ENCODE measurements at regions of chr5 and their contacts with region 1.

Region 1: DNA sequence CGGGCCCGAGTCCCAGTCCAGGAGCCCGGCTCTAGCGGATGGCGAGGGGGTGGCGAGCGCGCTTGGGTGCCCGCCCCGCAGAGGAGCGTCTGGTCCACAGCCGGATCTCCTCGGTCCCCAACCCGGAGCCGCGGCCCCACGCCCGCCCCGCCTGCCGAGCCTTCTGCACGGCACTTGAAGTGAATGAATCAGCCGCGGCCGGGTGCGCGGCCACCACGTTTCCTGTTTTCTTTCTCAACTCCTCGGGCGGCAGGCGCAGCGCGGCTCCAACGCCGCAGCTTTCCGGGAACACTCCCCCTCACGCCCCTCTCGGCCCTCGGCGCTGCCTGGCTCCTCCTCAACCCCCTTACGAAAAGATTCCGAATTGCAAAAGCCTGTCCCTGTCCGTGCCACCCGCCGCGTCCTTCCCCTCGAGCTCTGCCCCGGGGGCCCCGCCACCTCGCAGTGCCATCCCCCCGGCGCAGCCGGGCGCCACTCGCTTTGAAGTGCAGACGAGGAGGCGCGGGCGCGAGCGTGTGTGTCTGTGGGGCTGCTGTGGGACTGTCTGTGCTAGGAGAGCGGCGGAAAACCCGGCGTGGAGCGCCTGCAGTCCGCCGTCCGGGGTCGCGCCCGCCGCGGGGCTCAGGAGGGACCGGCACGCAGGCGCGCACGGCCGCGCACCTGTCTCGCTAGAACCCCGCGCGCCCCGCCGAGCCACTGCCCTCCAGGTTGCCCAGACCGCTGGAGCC is 456.6 kb downstream of the RAB3C start:
- DNase-seq: peak; percentile 92
- H3K4me3 Mint-ChIP-seq: peak overlapping the region; percentile 84
- H3K27ac Mint-ChIP-seq: peak overlapping the region; percentile 99
- H3K4me1 Mint-ChIP-seq: peaks cover 43% of the 10 kb centered on the region
- H3K27me3 Mint-ChIP-seq: no peaks in the 10 kb centered on the region

Region 2: GRCh38 chr5:59007460-59008063 is 31.9 kb before region 1 on chr5:
- CTCF ChIA-PET with region 1: no interaction called
- POLR2A ChIA-PET with region 1: no interaction called
- DNase-seq: no peak
- H3K4me3 Mint-ChIP-seq: no peak overlapping the region
- H3K27ac Mint-ChIP-seq: no peak overlapping the region
- H3K4me1 Mint-ChIP-seq: peaks cover 70% of the 10 kb centered on the region
- H3K27me3 Mint-ChIP-seq: no peaks in the 10 kb centered on the region

Region 3: DNA sequence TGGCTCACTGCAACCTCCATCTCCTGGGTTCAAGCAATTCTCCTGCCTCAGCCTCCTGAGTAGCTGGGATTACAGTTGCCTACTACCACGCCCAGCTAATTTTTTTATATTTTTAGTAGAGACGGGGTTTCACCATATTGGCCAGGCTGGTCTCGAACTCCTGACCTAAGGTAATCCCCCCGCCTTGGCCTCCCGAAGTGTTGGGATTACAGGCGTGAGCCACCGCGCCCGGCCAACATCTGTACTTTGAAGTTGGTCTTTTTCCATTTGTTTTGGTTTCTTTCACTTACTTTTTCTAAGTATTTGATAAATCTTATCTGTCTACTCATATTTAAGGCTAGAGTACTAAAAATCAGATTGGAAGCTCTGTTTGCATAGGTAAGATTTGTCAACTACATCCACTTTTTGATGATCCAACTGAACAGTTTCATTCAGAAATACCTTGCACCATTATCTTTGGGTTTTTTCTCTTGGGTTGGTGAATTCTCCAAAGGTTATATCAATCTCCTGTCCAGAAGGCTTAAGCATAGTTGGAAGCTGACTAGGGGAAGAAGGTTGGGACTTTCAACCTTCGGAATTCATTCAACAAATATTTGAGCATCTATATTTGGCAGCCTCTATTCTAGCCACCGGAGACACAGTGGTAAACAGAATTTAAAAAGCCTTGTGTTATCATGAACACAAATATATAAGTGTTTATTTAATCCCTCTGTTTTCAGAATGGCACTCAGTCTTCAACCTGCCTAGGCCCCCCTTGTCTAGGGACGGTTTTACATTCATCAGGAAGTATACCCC is 32.5 kb after region 1 on chr5:
- CTCF ChIA-PET with region 1: no interaction called
- POLR2A ChIA-PET with region 1: no interaction called
- DNase-seq: no peak
- H3K4me3 Mint-ChIP-seq: no peak overlapping the region
- H3K27ac Mint-ChIP-seq: no peak overlapping the region
- H3K4me1 Mint-ChIP-seq: no peaks in the 10 kb centered on the region
- H3K27me3 Mint-ChIP-seq: peaks cover 5% of the 10 kb centered on the region

Region 4: DNA sequence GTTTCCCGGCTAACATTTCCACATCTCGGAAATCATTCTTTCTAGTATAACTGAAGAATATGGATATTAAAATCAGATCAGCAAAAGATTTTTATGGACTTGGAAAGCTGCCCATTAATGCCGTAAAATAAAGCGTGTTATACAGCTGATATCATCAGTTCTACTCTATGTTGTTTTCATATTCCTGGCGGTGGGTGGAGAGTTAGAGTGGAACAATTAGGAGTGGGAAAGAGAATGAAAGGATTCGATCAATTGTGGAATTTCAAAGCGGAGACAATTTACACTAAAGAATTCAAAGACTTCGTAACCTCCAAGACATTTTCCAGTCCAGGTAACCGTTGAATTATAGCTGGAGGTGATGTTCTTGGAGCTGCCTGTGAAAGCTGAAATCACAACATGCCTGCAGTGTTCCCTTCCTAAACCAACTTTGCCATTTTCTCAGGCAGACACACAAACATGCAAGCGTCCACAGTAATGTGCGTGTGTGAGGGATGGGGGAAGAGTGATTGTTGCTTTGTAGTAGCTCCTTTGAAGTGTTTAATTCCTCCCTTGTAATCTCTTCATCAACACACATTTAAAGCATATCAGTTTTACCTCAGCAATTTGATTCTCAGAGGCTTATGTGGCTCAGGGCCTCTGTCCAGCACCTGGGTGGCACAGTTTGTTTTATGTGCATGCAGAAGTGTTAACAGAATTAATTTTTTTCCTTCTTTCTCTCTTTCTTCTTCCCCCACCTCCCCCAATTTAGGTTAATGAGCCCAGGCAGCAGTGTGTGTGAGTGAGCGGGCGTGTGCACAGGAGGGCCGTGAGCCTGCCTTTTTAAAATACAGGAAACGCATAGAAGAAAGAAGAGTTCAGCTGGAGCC is 87.5 kb after region 1 on chr5:
- CTCF ChIA-PET with region 1: interaction called, 11 read pairs
- POLR2A ChIA-PET with region 1: interaction called, 14 read pairs
- DNase-seq: no peak
- H3K4me3 Mint-ChIP-seq: no peak overlapping the region
- H3K27ac Mint-ChIP-seq: no peak overlapping the region
- H3K4me1 Mint-ChIP-seq: peaks cover 14% of the 10 kb centered on the region
- H3K27me3 Mint-ChIP-seq: no peaks in the 10 kb centered on the region